ENCODE measurements at regions of chr11 and their contacts with region 1.

Region 1: GRCh38 chr11:13183094-13183825 is 94.3 kb upstream of the BMAL1 start:
- DNase-seq: peak; percentile 11
- ATAC-seq: peak; percentile 71
- H3K4me3 Mint-ChIP-seq: no peak overlapping the region
- H3K27ac Mint-ChIP-seq: no peak overlapping the region
- H3K4me1 Mint-ChIP-seq: peaks cover 10% of the 10 kb centered on the region
- H3K27me3 Mint-ChIP-seq: peaks cover 19% of the 10 kb centered on the region

Region 2: DNA sequence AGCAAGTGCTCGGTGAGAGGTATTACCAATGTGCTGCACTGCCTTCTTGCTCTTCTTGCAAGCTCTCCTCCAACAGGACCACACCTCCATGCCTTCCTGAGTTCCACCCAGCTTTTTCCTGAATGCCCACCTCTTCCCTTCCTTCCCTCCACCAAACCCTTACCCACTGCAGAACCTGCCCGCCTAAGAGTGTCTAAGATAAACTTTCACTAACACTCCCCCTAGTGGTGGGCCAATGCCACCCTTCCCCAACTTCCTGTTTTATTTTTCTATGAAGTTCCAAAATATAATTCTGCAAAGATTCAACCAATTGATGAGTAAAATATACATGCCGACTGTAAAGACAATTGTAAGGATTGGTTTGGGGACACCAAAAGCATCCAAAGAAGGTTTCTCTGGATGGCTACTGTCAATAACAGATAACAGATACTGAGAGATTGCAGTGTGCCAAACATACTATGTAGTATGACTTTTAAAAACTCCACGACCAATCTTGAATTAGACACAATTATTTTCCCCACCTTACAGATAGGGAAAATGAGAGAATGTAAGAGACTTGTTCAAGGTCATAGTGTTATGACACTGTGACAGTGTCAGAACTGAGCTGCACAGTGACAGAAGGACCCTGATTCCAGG is 55.7 kb after region 1 on chr11:
- CTCF ChIA-PET with region 1: interaction called, 4 read pairs
- POLR2A ChIA-PET with region 1: no interaction called
- intact Hi-C with region 1: loop called (anchors 1 kb)
- DNase-seq: peak; percentile 70
- ATAC-seq: peak; percentile 70
- H3K4me3 Mint-ChIP-seq: no peak overlapping the region
- H3K27ac Mint-ChIP-seq: no peak overlapping the region
- H3K4me1 Mint-ChIP-seq: no peaks in the 10 kb centered on the region
- H3K27me3 Mint-ChIP-seq: peaks cover 8% of the 10 kb centered on the region

Measured in activated CD4-positive, alpha-beta T cell treated with anti-CD3 and anti-CD28 coated beads for 36 hours (primary cell).